Colonic mucosa (tissue), 4 donors: ENCODE measurements at regions of chr5 and their contacts with region 1.

Region 1: DNA sequence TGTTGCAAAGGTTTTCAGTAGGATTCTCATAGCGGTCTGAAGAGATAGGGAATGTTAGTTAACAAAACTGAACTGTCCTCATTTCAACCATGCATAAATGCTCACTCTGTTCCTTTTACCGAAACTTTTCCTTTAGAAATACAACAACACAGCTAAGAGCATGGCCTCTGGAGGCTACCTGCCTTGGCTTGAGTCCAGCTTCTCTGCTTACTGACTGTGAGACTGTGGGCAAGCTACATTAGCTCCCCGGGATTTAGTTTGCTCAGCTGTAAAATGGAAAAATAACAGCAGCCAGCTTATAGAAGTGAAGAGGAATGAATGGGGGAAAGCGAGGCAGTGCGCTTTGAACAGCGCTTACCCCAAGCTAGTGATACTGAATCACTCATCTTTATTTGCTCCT is 507.9 kb upstream of the DAP start:
- DNase-seq: no peak
- H3K4me3 ChIP-seq: no peak overlapping the region
- H3K27ac ChIP-seq: no peak overlapping the region
- H3K4me1 ChIP-seq: no peaks in the 10 kb centered on the region
- H3K27me3 ChIP-seq: no peaks in the 10 kb centered on the region
- CTCF ChIP-seq: no peak

Region 2: DNA sequence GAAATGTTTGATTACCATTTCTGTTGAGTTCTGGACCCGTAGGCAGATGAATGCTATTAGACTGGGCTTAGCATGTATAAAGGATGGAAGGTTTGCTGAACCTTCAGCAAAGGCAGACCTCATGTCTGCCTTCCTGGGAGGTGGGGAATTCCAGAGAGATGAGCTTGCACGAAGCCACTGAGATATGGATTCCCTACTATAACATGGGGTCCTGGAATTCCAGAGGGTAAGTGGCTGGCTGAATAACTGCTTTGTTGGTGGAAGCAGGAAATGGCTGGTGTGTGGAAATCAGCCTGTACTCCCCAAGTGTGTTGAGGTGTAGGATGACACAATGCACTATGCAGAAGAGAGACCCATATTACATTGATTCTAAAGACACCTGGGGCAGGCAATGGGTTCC is 109.0 kb after region 1 on chr5:
- intact Hi-C with region 1: no loop called
- DNase-seq: no peak
- H3K4me3 ChIP-seq: no peak overlapping the region
- H3K27ac ChIP-seq: no peak overlapping the region
- H3K4me1 ChIP-seq: no peaks in the 10 kb centered on the region
- H3K27me3 ChIP-seq: no peaks in the 10 kb centered on the region
- CTCF ChIP-seq: no peak

Region 3: DNA sequence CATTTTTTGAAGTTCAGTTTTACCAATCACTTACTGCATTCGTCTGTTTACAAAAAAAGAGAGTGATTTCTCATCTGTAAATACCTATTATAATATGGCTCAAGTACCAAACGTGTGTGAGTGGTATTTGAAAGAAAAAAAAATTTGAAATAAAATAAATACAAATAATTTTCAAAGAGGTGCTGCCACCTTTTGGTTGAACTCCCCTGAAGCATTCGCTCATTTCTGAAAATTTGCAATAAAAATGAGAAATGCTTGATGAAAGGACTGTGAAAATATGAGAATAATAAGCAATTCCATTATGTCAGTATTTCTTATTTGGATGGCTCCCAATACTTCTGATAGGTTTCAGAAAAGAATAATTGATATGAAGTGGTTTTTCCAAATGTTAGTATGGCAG is 225.4 kb after region 1 on chr5:
- intact Hi-C with region 1: loop called (anchors 5 kb)
- DNase-seq: no peak
- H3K4me3 ChIP-seq: no peak overlapping the region
- H3K27ac ChIP-seq: no peak overlapping the region
- H3K4me1 ChIP-seq: no peaks in the 10 kb centered on the region
- H3K27me3 ChIP-seq: no peaks in the 10 kb centered on the region
- CTCF ChIP-seq: no peak

Region 4: GRCh38 chr5:11785770-11786352 is 517.0 kb after region 1 on chr5:
- intact Hi-C with region 1: no loop called
- DNase-seq: no peak
- H3K4me3 ChIP-seq: no peak overlapping the region
- H3K27ac ChIP-seq: no peak overlapping the region
- H3K4me1 ChIP-seq: no peaks in the 10 kb centered on the region
- H3K27me3 ChIP-seq: no peaks in the 10 kb centered on the region
- CTCF ChIP-seq: no peak

Region 5: DNA sequence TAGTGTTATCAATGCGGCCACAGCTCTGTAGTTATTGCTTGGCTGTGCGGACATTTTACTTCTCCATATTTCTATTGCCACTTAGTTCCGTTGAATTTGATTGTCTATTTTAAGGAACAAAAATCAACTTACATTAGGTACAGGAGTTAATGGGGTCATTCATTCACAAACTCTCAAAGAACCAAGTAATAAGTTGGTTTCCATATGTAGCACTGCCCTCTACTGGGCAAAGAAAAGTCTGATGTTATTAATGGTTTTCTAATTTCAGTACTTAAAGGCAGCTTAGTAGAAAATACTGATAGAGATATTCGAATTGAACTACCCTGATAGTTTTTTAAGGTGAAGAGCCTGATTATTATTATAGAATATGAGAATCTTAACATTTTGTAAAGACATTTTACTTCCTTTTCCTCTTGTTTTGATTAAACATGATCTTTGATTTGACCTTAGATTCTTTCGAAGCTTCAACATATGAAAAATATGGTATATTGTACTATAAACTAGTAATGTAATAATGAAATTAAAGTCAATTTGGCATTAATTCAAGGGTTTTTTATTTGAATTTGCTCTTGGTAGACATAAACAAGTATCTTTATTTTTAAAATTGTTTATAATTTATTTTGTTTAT is 754.8 kb after region 1 on chr5:
- intact Hi-C with region 1: loop called (anchors 10 kb)
- DNase-seq: no peak
- H3K4me3 ChIP-seq: no peak overlapping the region
- H3K27ac ChIP-seq: no peak overlapping the region
- H3K4me1 ChIP-seq: no peaks in the 10 kb centered on the region
- H3K27me3 ChIP-seq: no peaks in the 10 kb centered on the region
- CTCF ChIP-seq: peak; percentile 28

Region 6: DNA sequence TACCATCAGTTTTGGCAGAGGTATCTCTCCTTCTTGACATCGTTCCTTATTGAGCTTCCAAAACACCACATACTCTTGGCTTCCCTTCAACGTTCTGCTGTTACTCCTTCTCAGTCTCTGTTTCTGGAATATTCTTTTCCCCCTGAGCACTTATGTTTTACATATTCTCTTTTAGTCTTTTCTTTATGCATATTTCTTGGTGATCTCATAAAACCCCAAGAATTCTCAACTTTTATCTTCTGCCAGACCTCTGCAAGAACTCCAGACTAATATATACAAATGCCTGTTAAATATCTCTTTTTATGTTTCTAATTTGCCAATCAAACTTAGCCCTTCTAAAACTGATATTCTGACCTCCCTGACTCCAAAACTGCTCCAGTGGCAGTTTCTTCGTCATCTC is 1088.7 kb after region 1 on chr5:
- intact Hi-C with region 1: no loop called
- DNase-seq: no peak
- H3K4me3 ChIP-seq: no peak overlapping the region
- H3K27ac ChIP-seq: no peak overlapping the region
- H3K4me1 ChIP-seq: no peaks in the 10 kb centered on the region
- H3K27me3 ChIP-seq: no peaks in the 10 kb centered on the region
- CTCF ChIP-seq: no peak